Esophagus squamous epithelium (tissue), 5 donors: ENCODE measurements at regions of chr22 and their contacts with region 1.

Region 1: GRCh38 chr22:36387752-36388518 is at the start of gene MYH9:
- DNase-seq: peak; percentile 97
- H3K4me3 ChIP-seq: peak within 1 kb of the TSS; percentile 68 to 100 (median 98)
- H3K27ac ChIP-seq: peak within 1 kb of the TSS; percentile 98 to 100 (median 100)
- H3K4me1 ChIP-seq: peaks cover 26 to 46% (median 34%) of the 10 kb centered on the region in 3 donors
- H3K27me3 ChIP-seq: no peaks in the 10 kb centered on the region
- CTCF ChIP-seq: peak in 3 of 6 experiments; percentile 8 to 17 (median 9)
- POLR2A ChIP-seq: peak in 3 of 4 donors; percentile 97 to 100 (median 99)
- total RNA-seq, gene MYH9: 216 to 339 (median 246) TPM

Region 2: DNA sequence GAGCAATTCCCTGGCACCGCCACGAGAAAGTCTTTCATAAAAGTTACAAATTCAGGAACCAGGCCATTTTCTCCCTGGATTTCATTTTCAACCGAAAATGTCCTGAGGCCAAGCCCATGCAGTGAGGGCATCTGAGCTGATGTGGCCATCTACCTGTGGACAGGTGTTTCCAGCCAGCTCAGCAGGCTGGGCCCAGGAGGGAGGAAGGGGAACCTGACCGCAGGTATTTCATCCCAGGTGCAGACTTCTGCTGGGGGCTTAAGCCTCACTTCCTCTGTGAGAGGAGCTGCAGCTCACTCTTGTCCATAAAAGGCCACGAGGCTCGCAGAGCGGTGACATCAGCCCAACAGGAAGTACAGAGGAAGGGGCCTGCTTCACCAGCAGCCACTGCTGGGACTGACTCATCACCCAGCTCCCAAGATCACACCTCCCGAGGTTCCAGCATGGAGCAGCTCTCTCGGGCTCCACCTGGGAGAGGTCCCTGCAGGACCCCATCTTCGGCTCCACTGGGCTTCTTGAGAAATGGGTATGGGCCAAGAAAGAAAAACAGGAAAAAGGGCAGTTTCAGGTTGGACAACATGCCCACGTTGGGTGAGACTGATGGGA is 56.5 kb before region 1 on chr22:
- intact Hi-C with region 1: loop called (anchors 5 kb)
- DNase-seq: peak; percentile 61
- H3K4me3 ChIP-seq: peak overlapping the region in 2 of 4 donors; percentile 11 to 41
- H3K27ac ChIP-seq: peak overlapping the region; percentile 92 to 100 (median 98)
- H3K4me1 ChIP-seq: peaks cover 92 to 100% (median 94%) of the 10 kb centered on the region in 3 donors
- H3K27me3 ChIP-seq: no peaks in the 10 kb centered on the region
- CTCF ChIP-seq: peak in 1 of 6 experiments; percentile 17
- POLR2A ChIP-seq: peak in 3 of 4 donors; percentile 44 to 79 (median 68)

Region 3: GRCh38 chr22:36454916-36455570 is 67.1 kb after region 1 on chr22:
- intact Hi-C with region 1: loop called (anchors 5 kb)
- DNase-seq: peak; percentile 59
- H3K4me3 ChIP-seq: peak overlapping the region; percentile 43 to 71 (median 52)
- H3K27ac ChIP-seq: peak overlapping the region; percentile 79 to 94 (median 90)
- H3K4me1 ChIP-seq: peaks cover 25 to 78% (median 52%) of the 10 kb centered on the region in 3 donors
- H3K27me3 ChIP-seq: no peaks in the 10 kb centered on the region
- CTCF ChIP-seq: peak in 3 of 6 experiments; percentile 7 to 30 (median 22)
- POLR2A ChIP-seq: peak in 3 of 4 donors; percentile 51 to 93 (median 75)